ENCODE measurements at regions of chr1 and their contacts with region 1.

Region 1: GRCh38 chr1:8540261-8540941 is 222.5 kb downstream of the SLC45A1 start:
- DNase-seq: no peak
- H3K4me3 Mint-ChIP-seq: peak overlapping the region; percentile 54
- H3K27ac Mint-ChIP-seq: peak overlapping the region; percentile 86
- H3K4me1 Mint-ChIP-seq: peaks cover 53% of the 10 kb centered on the region
- H3K27me3 Mint-ChIP-seq: no peaks in the 10 kb centered on the region

Region 2: DNA sequence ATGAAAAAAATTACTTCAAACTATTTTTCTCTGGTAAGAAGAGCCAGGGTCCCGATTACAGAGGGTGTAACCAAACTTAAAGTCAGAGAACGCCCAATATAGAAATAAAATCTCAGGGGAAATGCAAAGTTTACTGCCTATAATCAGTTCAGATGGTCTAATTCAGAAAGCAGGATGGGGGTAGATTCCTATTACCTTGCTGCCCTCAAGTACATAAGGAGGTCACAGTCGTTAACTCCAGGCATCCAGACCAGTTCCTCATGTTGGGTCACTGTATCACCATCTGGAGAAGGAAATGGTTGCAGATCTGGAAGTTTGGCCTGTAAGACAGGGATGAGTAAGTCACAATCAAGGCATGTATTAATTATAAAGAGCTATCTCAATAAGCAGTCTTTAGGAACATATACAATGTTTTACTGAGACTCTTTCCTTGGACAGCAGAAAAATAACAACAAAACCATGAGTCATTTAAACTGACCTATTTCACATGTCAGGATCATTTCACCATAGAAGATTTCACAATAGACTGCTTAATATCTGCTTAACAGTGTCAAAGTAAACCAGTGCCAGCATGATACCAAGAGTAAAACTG is 43.1 kb before region 1 on chr1:
- intact Hi-C with region 1: loop called (anchors 2 kb)
- DNase-seq: no peak
- H3K4me3 Mint-ChIP-seq: no peak overlapping the region
- H3K27ac Mint-ChIP-seq: peak overlapping the region; percentile 6
- H3K4me1 Mint-ChIP-seq: peaks cover 22% of the 10 kb centered on the region
- H3K27me3 Mint-ChIP-seq: no peaks in the 10 kb centered on the region

Region 3: GRCh38 chr1:8554956-8555534 is 14.6 kb after region 1 on chr1:
- intact Hi-C with region 1: loop called (anchors 2 kb)
- DNase-seq: no peak
- H3K4me3 Mint-ChIP-seq: no peak overlapping the region
- H3K27ac Mint-ChIP-seq: peak overlapping the region; percentile 86
- H3K4me1 Mint-ChIP-seq: peaks cover 50% of the 10 kb centered on the region
- H3K27me3 Mint-ChIP-seq: no peaks in the 10 kb centered on the region

Region 4: DNA sequence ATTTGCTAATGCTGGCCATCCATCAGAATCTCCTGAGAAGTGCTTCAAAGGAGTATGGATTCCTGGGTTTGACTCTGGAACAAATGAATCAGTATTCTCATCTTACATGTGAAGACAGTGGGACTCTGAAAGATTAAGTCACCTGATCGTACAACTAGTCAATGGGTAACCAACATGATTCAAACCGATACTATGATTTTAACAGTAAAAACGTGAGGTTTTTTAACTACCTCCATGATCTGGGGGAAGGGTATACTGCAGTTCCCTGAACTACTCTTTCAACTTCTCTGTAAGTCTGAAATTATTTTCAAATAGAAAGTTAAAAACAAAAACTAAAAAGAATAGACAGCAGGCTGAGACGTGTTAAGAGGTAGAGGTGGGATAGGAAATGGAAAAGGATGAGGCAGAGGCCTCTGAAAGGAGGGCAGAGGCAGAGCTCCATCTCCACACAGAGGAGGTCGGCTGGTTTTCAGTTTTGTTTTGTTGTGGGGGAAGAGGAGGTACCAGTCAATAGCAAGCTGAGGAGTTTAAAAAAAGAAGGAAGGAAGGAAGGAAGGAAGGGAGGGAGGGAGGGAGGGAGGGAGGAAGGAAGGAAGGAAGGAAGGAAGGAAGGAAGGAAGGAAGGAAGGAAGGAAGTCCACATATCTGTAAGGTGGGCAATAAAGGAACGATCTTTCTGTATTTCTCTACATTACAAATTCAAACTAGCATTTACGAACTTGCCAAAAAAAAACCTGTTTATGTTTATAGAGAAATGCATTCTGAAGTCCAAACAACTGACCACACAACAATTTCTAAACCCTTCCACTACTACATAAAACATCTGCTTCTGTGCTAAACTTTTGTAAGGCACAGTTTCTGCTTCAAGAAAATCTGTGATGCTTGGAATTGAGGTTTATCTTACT is 63.9 kb after region 1 on chr1:
- intact Hi-C with region 1: loop called (anchors 5 kb)
- DNase-seq: peak; percentile 46
- H3K4me3 Mint-ChIP-seq: peak overlapping the region; percentile 72
- H3K27ac Mint-ChIP-seq: peak overlapping the region; percentile 93
- H3K4me1 Mint-ChIP-seq: peaks cover 52% of the 10 kb centered on the region
- H3K27me3 Mint-ChIP-seq: no peaks in the 10 kb centered on the region

Measured in activated T-helper 2 cell treated with anti-CD3 and anti-CD28 coated beads, Interferon-gamma antibody, Interleukin-2, Interleukin-4, amounts not matched to agents 10 μg/mL and 5 μg/mL and 100 μg/mL, durations not matched to agents 14 hours and 24 hours and 36 hours (primary cell).